Activated T-helper 1 cell treated with anti-CD3 and anti-CD28 coated beads, Interleukin-12 subunit alpha, Interleukin-12 subunit beta, Interleukin-2, Interleukin-4 antibody, amounts not matched to agents 30 ng/mL and 10 ng/mL and 1 ng/mL, durations not matched to agents 14 hours and 24 hours and 36 hours (primary cell): ENCODE measurements at regions of chr18 and their contacts with region 1.

Region 1: GRCh38 chr18:8052237-8052701 is 485.2 kb downstream of the PTPRM start:
- DNase-seq: no peak
- H3K4me3 Mint-ChIP-seq: no peak overlapping the region
- H3K27ac Mint-ChIP-seq: no peak overlapping the region
- H3K4me1 Mint-ChIP-seq: no peaks in the 10 kb centered on the region
- H3K27me3 Mint-ChIP-seq: no peaks in the 10 kb centered on the region

Region 2: GRCh38 chr18:8389391-8390340 is 337.4 kb after region 1 on chr18:
- intact Hi-C with region 1: loop called (anchors 5 kb)
- DNase-seq: no peak
- H3K4me3 Mint-ChIP-seq: no peak overlapping the region
- H3K27ac Mint-ChIP-seq: no peak overlapping the region
- H3K4me1 Mint-ChIP-seq: no peaks in the 10 kb centered on the region
- H3K27me3 Mint-ChIP-seq: no peaks in the 10 kb centered on the region